Esophagus squamous epithelium (tissue), 5 donors: ENCODE measurements at regions of chr7 and their contacts with region 1.

Region 1: DNA sequence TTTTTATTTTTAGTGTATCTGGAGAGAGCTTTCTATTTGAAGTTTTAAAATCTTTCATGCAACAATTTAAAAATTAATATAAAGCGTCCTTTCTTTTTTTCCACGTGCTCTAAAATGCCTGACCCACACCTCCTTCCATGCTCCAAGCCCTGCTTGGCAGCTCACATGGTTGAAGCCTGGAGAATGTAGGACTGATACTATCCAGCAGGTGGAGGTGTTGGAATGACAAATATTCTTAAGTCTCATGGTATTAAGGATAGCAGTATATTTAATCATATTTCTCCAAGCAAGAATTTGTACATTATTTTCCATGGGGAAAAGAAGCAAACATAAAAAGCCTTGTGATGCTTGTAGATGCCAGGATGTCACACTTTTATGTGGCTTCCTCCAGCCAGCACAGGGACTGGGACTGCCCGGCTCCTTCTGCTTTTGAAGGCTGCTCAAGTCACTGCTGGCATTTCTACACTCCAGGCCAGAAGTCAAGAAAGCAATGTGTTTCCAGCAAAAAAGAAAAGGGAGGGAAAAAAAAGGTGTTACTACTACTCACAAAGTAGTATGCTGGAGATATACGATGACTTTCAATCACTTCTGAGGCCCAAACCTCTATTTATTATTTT is 49.7 kb downstream of the BZW2 start:
- DNase-seq: no peak
- H3K4me3 ChIP-seq: no peak overlapping the region
- H3K27ac ChIP-seq: no peak overlapping the region
- H3K4me1 ChIP-seq: no peaks in the 10 kb centered on the region
- H3K27me3 ChIP-seq: no peaks in the 10 kb centered on the region
- CTCF ChIP-seq: peak in 5 of 6 experiments; percentile 40 to 73 (median 55)
- POLR2A ChIP-seq: no peak

Region 2: GRCh38 chr7:16918288-16918895 is 222.7 kb after region 1 on chr7:
- intact Hi-C with region 1: loop called (anchors 10 kb)
- DNase-seq: no peak
- H3K4me3 ChIP-seq: no peak overlapping the region
- H3K27ac ChIP-seq: no peak overlapping the region
- H3K4me1 ChIP-seq: peaks cover 0 to 42% (median 6%) of the 10 kb centered on the region in 3 donors
- H3K27me3 ChIP-seq: peaks cover 0 to 14% (median 0%) of the 10 kb centered on the region in 4 donors
- CTCF ChIP-seq: peak; percentile 59 to 78 (median 68)
- POLR2A ChIP-seq: no peak

Region 3: GRCh38 chr7:17275749-17276671 is 580.3 kb after region 1 on chr7:
- intact Hi-C with region 1: no loop called
- DNase-seq: no peak
- H3K4me3 ChIP-seq: no peak overlapping the region
- H3K27ac ChIP-seq: peak overlapping the region; percentile 19 to 65 (median 42)
- H3K4me1 ChIP-seq: peaks cover 0 to 29% (median 0%) of the 10 kb centered on the region in 3 donors
- H3K27me3 ChIP-seq: no peaks in the 10 kb centered on the region
- CTCF ChIP-seq: no peak
- POLR2A ChIP-seq: no peak

Region 4: GRCh38 chr7:17342756-17343155 is 647.0 kb after region 1 on chr7:
- intact Hi-C with region 1: no loop called
- DNase-seq: no peak
- H3K4me3 ChIP-seq: no peak overlapping the region
- H3K27ac ChIP-seq: no peak overlapping the region
- H3K4me1 ChIP-seq: peaks cover 0 to 49% (median 9%) of the 10 kb centered on the region in 3 donors
- H3K27me3 ChIP-seq: no peaks in the 10 kb centered on the region
- CTCF ChIP-seq: no peak
- POLR2A ChIP-seq: no peak